ENCODE measurements at regions of chr1 and their contacts with region 1.

Region 1: DNA sequence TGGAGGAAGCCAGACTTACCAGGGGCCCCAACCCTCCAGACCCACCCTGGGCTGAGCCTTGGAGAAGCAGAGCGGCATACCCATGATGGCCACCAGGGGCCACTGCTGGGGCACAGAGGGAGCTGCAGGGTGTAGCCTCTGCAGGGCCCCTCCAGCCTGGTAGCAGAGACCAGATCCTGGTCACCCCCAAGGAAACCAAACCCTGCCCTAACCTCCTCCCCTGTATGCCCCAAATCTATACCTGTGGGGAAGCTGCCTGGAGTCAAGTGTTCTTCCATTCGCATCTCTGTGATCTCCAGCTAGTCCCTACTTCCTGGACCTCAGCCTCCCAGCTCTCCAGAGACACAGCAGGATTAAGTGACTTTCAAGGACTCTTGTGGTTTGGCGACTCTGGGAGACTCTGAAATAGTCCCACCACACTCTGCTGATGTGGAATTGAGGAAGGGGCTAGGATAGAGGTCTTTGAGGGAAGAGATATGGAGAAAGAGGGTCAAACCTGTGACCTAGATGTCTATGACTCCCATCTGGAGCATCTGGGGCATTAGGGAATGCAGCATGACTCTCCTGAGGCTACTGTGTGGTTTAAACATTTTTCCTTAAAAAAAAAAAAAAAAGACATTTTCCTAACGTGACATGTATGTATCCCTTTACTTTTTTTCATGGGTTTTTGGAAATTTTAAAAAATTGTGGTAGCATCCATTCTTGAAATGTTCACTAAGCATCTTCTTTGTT is 119.2 kb upstream of the IPO9 start:
- DNase-seq: no peak
- H3K4me3 ChIP-seq: no peak overlapping the region
- H3K27ac ChIP-seq: peak overlapping the region; percentile 70
- H3K27me3 ChIP-seq: no peaks in the 10 kb centered on the region
- CTCF ChIP-seq: peak; percentile 85

Region 2: GRCh38 chr1:201530741-201531531 is 178.8 kb before region 1 on chr1:
- CTCF ChIA-PET with region 1: interaction called, 33 read pairs
- POLR2A ChIA-PET with region 1: no interaction called
- DNase-seq: no peak
- H3K4me3 ChIP-seq: no peak overlapping the region
- H3K27ac ChIP-seq: peak overlapping the region; percentile 31
- H3K27me3 ChIP-seq: no peaks in the 10 kb centered on the region
- CTCF ChIP-seq: peak; percentile 92

Region 3: DNA sequence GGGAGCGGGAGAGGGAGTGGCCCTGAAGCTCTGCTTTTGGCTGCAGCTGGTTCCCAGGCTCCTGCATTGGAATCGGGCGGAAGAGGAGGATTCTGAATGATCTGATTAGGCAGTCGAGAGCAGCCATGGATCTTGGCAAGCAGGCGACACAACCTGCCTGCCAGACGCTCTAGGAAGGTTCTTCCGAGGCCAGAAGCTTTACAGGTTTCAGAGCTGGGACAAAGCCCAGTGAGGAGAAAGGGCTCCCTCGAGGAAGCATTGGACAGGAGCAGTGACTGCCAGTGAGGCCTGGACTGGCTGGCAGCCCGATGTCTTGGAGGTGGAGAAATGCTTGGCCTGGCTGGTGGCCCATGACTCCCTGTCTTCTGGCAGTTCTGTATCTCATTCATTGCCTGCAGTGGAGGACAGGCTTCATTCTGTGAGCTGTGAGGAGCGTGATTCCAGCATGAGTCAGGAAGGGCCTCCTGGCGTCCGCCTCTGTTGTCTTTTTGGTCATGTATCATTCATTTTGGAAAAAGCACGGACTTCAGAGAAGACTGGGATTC is 13.4 kb before region 1 on chr1:
- CTCF ChIA-PET with region 1: interaction called, 10 read pairs
- POLR2A ChIA-PET with region 1: interaction called, 4 read pairs
- DNase-seq: peak; percentile 63
- H3K4me3 ChIP-seq: no peak overlapping the region
- H3K27ac ChIP-seq: peak overlapping the region; percentile 70
- H3K27me3 ChIP-seq: no peaks in the 10 kb centered on the region
- CTCF ChIP-seq: peak; percentile 27

Region 4: GRCh38 chr1:201737352-201738060 is 27.8 kb after region 1 on chr1:
- CTCF ChIA-PET with region 1: interaction called, 10 read pairs
- POLR2A ChIA-PET with region 1: interaction called, 8 read pairs
- DNase-seq: no peak
- H3K4me3 ChIP-seq: no peak overlapping the region
- H3K27ac ChIP-seq: peak overlapping the region; percentile 65
- H3K27me3 ChIP-seq: no peaks in the 10 kb centered on the region
- CTCF ChIP-seq: no peak

Region 5: GRCh38 chr1:201769966-201770365 is 60.2 kb after region 1 on chr1:
- CTCF ChIA-PET with region 1: interaction called, 10 read pairs
- POLR2A ChIA-PET with region 1: no interaction called
- DNase-seq: no peak
- H3K4me3 ChIP-seq: no peak overlapping the region
- H3K27ac ChIP-seq: no peak overlapping the region
- H3K27me3 ChIP-seq: no peaks in the 10 kb centered on the region
- CTCF ChIP-seq: no peak

Measured in AG04450 (cell line).